Posterior vena cava (tissue), 2 donors: ENCODE measurements at regions of chr6 and their contacts with region 1.

Region 1: GRCh38 chr6:65835650-65836049 is 128.6 kb upstream of the EYS start:
- DNase-seq: no peak

Region 2: DNA sequence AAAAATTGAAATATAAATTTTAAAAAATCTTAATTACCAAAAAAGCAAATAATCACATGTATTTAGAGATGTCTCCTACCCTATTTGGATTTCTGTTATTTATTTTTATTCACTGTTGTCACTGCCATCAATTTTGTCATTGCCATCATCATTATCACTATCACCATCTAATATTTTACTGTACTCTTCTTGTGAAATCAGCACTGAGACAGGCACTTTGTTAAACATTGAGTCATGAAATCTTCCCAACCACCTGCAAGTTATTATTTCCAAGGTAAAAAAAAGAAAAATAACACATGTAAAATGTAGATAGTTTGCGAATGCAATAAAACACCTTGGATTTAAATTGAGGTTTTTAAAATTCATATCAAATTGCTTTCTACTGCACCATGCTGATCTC is 16.1 kb after region 1 on chr6:
- intact Hi-C with region 1: loop called in 1 of 2 experiments (anchors 1 kb)
- DNase-seq: no peak

Region 3: GRCh38 chr6:67141005-67141404 is 1305.4 kb after region 1 on chr6:
- intact Hi-C with region 1: no loop called
- DNase-seq: no peak